Aorta (tissue), 5 donors: ENCODE measurements at regions of chr17 and their contacts with region 1.

Region 1: GRCh38 chr17:4304417-4305027 is 40.7 kb upstream of the ANKFY1 start:
- DNase-seq: peak in 1 of 2 donors; percentile 47
- ATAC-seq: peak; percentile 70
- H3K4me3 ChIP-seq: no peak overlapping the region
- H3K27ac ChIP-seq: no peak overlapping the region
- H3K4me1 ChIP-seq: no peaks in the 10 kb centered on the region
- H3K27me3 ChIP-seq: no peaks in the 10 kb centered on the region

Region 2: GRCh38 chr17:4263282-4264215 is 41.0 kb before region 1 on chr17 and contains the start of gene ANKFY1:
- intact Hi-C with region 1: no loop called
- DNase-seq: peak; percentile 98 to 100
- ATAC-seq: peak; percentile 98
- H3K4me3 ChIP-seq: peak within 1 kb of the TSS; percentile 87 to 91
- H3K27ac ChIP-seq: peak within 1 kb of the TSS in 1 of 2 donors; percentile 39
- H3K4me1 ChIP-seq: peaks cover 0 to 2% of the 10 kb centered on the region in 2 donors
- H3K27me3 ChIP-seq: no peaks in the 10 kb centered on the region
- total RNA-seq, gene ANKFY1: 58.0 to 71.6 TPM

Region 3: GRCh38 chr17:4412933-4413831 is 108.7 kb after region 1 on chr17:
- intact Hi-C with region 1: loop called in 1 of 2 experiments (anchors 5 kb)
- DNase-seq: peak; percentile 95 to 99
- ATAC-seq: peak; percentile 95
- H3K4me3 ChIP-seq: no peak overlapping the region
- H3K27ac ChIP-seq: no peak overlapping the region
- H3K4me1 ChIP-seq: no peaks in the 10 kb centered on the region
- H3K27me3 ChIP-seq: no peaks in the 10 kb centered on the region